Naive thymus-derived CD4-positive, alpha-beta T cell (primary cell): ENCODE measurements at regions of chr14 and their contacts with region 1.

Region 1: DNA sequence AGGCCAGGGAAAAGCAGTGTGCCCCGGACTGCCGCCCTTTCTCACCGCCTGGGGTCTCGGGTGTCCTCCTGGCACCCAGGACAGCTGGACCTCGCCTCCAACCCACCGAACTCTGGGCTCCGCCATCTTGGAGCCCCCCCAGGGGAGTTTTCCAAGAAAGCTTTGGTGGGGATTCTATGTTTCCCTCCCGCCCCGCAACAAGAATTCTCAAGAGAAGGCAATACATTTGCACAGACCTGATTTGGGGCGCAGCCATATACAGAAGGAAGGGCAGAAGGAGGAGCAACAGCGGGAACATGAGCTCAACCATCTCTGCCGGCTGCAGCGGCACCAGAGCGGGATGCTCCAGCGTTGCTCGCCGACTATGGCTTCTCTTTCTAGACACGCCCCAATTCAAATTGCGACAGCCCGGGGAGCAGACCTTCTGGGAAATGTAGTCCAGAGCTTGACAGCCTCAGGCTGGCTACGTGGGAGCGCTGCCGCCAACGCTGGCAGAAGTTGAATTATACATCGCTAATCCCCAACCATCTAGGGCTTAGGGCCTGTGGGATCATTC is at the start of gene RDH11:
- DNase-seq: peak; percentile 53 to 89 (median 82)
- ATAC-seq: peak; percentile 97
- H3K4me3 ChIP-seq: peak within 1 kb of the TSS; percentile 88
- H3K4me3 Mint-ChIP-seq: peak within 1 kb of the TSS; percentile 87 to 98 (median 92)
- H3K27ac ChIP-seq: peak within 1 kb of the TSS; percentile 75
- H3K27ac Mint-ChIP-seq: peak within 1 kb of the TSS; percentile 66 to 95 (median 87)
- H3K4me1 ChIP-seq: peaks cover 0 to 3% of the 10 kb centered on the region in 2 donors
- H3K4me1 Mint-ChIP-seq: peaks cover 12 to 32% (median 21%) of the 10 kb centered on the region in 7 donors
- H3K27me3 ChIP-seq: no peaks in the 10 kb centered on the region
- H3K27me3 Mint-ChIP-seq: no peaks in the 10 kb centered on the region
- total RNA-seq, gene RDH11: 22.3 to 44.5 (median 42.6) TPM

Region 2: GRCh38 chr14:66507722-66508546 is 1187.5 kb before region 1 on chr14 and contains the start of gene GPHN:
- CTCF ChIA-PET with region 1: no interaction called
- POLR2A ChIA-PET with region 1: no interaction called
- intact Hi-C with region 1: loop called (anchors 1 to 5 kb)
- DNase-seq: peak; percentile 62 to 87 (median 82)
- ATAC-seq: peak; percentile 93
- H3K4me3 ChIP-seq: peak within 1 kb of the TSS; percentile 78
- H3K4me3 Mint-ChIP-seq: peak within 1 kb of the TSS; percentile 94 to 100 (median 99)
- H3K27ac ChIP-seq: peak within 1 kb of the TSS; percentile 70
- H3K27ac Mint-ChIP-seq: peak within 1 kb of the TSS; percentile 71 to 96 (median 91)
- H3K4me1 ChIP-seq: peaks cover 6 to 7% of the 10 kb centered on the region in 2 donors
- H3K4me1 Mint-ChIP-seq: peaks cover 16 to 42% (median 34%) of the 10 kb centered on the region in 7 donors
- H3K27me3 ChIP-seq: no peaks in the 10 kb centered on the region
- H3K27me3 Mint-ChIP-seq: peaks cover 0 to 29% (median 0%) of the 10 kb centered on the region in 5 donors
- total RNA-seq, gene GPHN: 11.8 to 28.1 (median 14.8) TPM

Region 3: GRCh38 chr14:67359775-67360648 is 335.5 kb before region 1 on chr14 and contains the starts of genes ATP6V1D and EIF2S1:
- CTCF ChIA-PET with region 1: no interaction called
- POLR2A ChIA-PET with region 1: interaction called, 9 read pairs
- intact Hi-C with region 1: loop called (anchors 1 kb)
- DNase-seq: peak; percentile 97 to 100 (median 100)
- ATAC-seq: peak; percentile 94
- H3K4me3 ChIP-seq: peak within 1 kb of the TSS; percentile 87
- H3K4me3 Mint-ChIP-seq: peak within 1 kb of the TSS; percentile 93 to 99 (median 98)
- H3K27ac ChIP-seq: peak within 1 kb of the TSS; percentile 82
- H3K27ac Mint-ChIP-seq: peak within 1 kb of the TSS; percentile 94 to 99 (median 96)
- H3K4me1 ChIP-seq: peaks cover 24 to 38% of the 10 kb centered on the region in 2 donors
- H3K4me1 Mint-ChIP-seq: peaks cover 43 to 94% (median 85%) of the 10 kb centered on the region in 7 donors
- H3K27me3 ChIP-seq: no peaks in the 10 kb centered on the region
- H3K27me3 Mint-ChIP-seq: peaks cover 0 to 5% (median 0%) of the 10 kb centered on the region in 5 donors
- total RNA-seq, gene ATP6V1D: 28.5 to 41.5 (median 33.4) TPM
- total RNA-seq, gene EIF2S1: 41.4 to 115 (median 49.4) TPM

Region 4: DNA sequence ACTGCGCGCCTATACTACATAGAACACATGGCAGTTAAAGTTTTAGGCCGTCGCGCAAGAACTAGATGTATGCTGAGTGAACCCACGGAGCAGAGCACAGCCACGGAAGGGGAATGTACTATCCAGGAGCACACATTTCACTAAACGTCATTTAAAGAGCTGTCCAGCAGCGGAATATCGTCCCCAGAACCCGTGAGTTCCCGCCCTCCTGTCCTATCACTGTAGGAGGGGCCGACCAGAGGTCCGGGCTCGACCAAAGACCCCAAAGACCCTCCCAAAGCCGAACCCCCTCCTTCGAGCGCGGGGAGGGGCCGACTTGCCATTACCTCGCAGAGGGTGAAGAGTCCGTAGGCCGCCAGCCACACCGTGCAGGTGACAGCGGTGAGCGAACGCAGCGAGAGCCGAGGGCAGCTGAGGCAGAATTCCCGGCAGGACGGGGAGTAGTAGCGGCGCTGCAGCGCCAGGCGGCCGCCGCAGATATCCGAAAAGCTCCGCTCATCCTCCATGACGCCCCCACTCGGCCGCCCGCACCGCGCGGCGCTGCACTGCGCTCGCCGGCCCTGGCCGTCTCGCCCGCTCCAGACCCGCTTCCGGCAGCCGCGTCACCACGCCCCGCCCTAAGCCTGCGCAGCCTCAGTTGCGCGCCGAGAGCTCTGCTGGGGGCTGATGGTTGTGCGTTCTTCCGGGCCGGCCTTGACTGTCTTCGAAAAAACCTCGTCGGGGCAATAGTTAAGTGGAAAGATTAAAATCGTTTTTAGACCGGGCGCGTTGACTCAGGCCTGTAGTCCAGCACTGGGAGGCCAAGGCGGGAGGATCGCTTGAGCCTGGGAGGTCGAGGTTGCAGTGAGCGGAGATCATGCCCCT is 95.5 kb before region 1 on chr14 and contains the start of gene PIGH:
- CTCF ChIA-PET with region 1: interaction called, 4 read pairs
- POLR2A ChIA-PET with region 1: interaction called, 14 read pairs
- intact Hi-C with region 1: loop called (anchors 1 kb)
- DNase-seq: peak; percentile 89 to 96 (median 94)
- ATAC-seq: peak; percentile 98
- H3K4me3 ChIP-seq: peak within 1 kb of the TSS; percentile 70
- H3K4me3 Mint-ChIP-seq: peak within 1 kb of the TSS; percentile 87 to 100 (median 98)
- H3K27ac ChIP-seq: peak within 1 kb of the TSS; percentile 86
- H3K27ac Mint-ChIP-seq: peak within 1 kb of the TSS; percentile 87 to 99 (median 97)
- H3K4me1 ChIP-seq: peaks cover 16 to 22% of the 10 kb centered on the region in 2 donors
- H3K4me1 Mint-ChIP-seq: peaks cover 26 to 57% (median 46%) of the 10 kb centered on the region in 7 donors
- H3K27me3 ChIP-seq: no peaks in the 10 kb centered on the region
- H3K27me3 Mint-ChIP-seq: peaks cover 0 to 10% (median 0%) of the 10 kb centered on the region in 5 donors
- total RNA-seq, gene PIGH: 14.3 to 42.1 (median 34.5) TPM

Region 5: DNA sequence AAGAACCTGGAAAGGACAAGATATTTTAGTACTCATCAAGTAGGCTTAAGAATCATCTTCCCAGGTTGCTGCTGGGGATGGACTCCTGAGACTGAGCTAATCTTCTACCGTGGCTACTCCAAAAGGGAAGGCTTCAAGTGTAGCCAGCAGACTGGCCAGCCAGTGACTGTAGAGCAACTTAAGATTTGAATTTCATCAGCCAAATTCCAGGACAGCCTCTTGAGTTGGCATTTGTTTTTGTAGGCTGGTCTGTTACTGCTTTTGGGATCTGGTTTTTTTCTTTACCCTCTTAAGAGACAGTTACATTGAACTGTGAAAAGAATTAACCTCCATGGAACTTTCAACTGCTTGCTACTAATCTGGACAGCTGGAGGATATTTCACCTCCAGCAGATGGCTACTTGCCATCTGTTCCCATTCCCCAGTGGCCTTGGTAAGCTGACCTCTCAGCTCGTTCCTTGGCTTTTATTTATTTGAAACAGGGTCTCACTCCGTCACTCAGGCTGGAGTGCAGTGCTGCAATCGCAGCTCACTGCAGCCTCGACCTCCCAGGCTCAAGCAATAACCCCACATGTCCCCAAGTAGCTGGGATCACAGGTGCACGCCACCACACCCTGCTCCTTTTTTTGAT is 41.7 kb before region 1 on chr14:
- CTCF ChIA-PET with region 1: no interaction called
- POLR2A ChIA-PET with region 1: no interaction called
- intact Hi-C with region 1: no loop called
- DNase-seq: no peak
- ATAC-seq: no peak
- H3K4me3 ChIP-seq: no peak overlapping the region
- H3K4me3 Mint-ChIP-seq: no peak overlapping the region
- H3K27ac ChIP-seq: no peak overlapping the region
- H3K27ac Mint-ChIP-seq: no peak overlapping the region
- H3K4me1 ChIP-seq: no peaks in the 10 kb centered on the region
- H3K4me1 Mint-ChIP-seq: no peaks in the 10 kb centered on the region
- H3K27me3 ChIP-seq: no peaks in the 10 kb centered on the region
- H3K27me3 Mint-ChIP-seq: no peaks in the 10 kb centered on the region

Region 6: GRCh38 chr14:67683842-67684241 is 11.6 kb before region 1 on chr14:
- CTCF ChIA-PET with region 1: no interaction called
- POLR2A ChIA-PET with region 1: interaction called, 13 read pairs
- intact Hi-C with region 1: no loop called
- DNase-seq: no peak
- ATAC-seq: no peak
- H3K4me3 ChIP-seq: no peak overlapping the region
- H3K4me3 Mint-ChIP-seq: no peak overlapping the region
- H3K27ac ChIP-seq: no peak overlapping the region
- H3K27ac Mint-ChIP-seq: peak overlapping the region in 4 of 9 donors; percentile 0 to 24 (median 12)
- H3K4me1 ChIP-seq: no peaks in the 10 kb centered on the region
- H3K4me1 Mint-ChIP-seq: peaks cover 3 to 38% (median 20%) of the 10 kb centered on the region in 7 donors
- H3K27me3 ChIP-seq: no peaks in the 10 kb centered on the region
- H3K27me3 Mint-ChIP-seq: no peaks in the 10 kb centered on the region